Right ventricle myocardium inferior (tissue), 1 donor: ENCODE measurements at regions of chr1 and their contacts with region 1.

Region 1: GRCh38 chr1:26723013-26723991 is 27.5 kb downstream of the ARID1A start:
- DNase-seq: peak; percentile 86
- ATAC-seq: peak; percentile 98

Region 2: DNA sequence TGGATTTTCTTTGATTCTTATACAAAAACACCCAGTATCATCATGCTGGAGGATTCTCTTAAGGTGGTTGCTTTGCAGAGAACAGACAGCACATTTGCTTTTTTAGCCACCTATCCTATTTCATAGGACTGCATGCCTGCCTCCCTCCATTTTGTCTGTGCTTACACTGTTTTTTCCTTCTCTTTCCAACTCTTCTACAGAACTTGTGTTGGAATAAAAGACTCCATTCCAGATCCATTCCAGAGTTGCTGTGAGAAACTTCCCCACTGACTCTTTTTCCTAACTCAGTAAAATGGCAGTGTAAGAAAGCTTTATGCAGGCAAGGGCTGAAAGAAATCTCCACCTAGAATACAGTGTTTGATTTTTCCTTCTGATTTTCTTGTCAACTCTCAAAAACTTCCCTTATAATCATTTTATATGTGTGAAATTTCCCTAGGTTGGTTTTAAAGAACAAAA is 32.7 kb before region 1 on chr1:
- intact Hi-C with region 1: no loop called
- DNase-seq: no peak
- ATAC-seq: no peak

Region 3: DNA sequence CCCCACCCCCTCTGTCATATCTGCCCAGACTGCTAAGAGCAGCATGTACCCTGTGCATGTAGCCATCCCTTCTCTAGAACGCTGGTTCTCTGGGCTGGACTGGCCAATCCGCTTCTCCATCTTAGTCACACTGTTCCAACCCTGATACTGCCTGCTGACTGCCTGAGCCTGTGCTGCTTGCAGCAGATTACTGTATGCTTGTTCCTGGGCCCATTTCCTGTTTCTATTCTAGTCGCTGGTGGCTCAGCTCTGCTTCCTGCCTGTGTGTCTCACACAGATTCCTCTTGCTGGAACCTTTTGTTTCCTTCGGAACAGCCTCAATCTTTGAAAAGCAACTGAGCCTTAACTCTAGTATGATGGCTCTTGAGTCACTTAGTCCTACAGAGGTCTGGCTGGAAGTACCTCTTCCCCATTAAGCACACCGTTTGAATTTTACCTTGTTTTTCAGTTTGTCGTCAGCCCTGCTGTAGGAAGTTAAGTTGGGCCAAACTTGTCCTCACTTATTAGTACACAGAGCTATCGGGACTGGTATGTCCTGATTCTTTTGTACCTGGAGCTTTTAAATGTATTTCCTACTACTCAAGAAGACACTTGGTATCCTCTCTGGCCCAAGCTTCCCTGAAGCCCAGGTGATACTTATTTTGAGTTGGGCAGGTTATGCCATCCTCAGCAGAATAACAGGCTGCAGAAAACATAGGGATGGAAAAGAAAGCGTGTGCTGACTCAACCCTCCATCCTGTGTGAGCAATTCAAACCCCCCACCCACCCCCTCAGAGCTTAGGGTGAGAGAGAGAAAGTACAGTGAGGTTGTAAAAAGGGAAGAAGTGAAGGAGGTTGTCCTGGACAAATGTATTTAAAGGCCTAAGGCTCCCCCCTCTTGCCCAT is 21.0 kb after region 1 on chr1:
- intact Hi-C with region 1: loop called (anchors 2 kb)
- DNase-seq: peak; percentile 88
- ATAC-seq: peak; percentile 98